Activated CD4-positive, alpha-beta memory T cell treated with anti-CD3 and anti-CD28 coated beads for 36 hours (primary cell): ENCODE measurements at regions of chr2 and their contacts with region 1.

Region 1: DNA sequence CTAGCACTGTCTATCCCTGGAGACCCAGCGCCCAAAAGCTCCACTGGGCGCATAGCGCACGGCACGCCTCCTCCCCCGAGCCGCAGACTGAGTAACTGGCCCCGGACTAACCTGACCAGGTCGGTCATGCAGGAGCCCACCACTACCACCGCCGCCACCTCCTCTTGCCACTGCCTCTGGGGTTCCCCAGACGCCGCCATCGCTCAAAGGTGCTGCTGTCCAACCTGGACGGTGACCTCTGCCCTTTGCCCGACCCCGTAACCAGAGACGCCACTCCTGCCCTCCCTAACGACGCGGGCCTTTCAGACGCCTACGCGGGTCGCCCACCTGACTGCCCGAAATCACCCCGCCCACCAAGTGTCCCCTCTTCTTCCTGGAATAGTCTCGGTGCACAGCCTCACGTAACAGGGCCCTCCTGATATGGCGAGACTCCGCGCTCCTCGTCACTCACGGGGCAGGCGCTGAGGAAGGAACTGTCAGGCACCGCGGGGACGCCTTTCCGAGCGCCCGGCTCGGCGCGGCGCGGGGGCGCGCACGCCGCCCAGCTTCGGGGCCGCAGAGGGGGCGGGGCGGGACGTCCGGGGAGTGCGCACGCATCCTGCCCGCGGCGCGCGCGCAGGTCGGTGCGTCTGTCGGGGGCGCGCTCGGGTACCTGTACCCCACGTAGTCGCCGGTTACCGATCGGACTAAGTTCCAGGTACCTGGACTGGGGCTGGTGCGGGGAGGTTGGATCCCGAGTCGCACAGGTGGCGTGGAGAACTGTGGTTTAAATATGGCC is at the starts of genes BABAM2 and RBKS:
- DNase-seq: peak; percentile 93
- H3K4me3 Mint-ChIP-seq: peak within 1 kb of the TSS; percentile 98
- H3K27ac Mint-ChIP-seq: peak within 1 kb of the TSS; percentile 100
- H3K4me1 Mint-ChIP-seq: peaks cover 63% of the 10 kb centered on the region
- H3K27me3 Mint-ChIP-seq: peaks cover 3% of the 10 kb centered on the region
- total RNA-seq, gene BABAM2: 72.3 to 76.6 TPM
- total RNA-seq, gene RBKS: 9.2 to 9.7 TPM

Region 2: DNA sequence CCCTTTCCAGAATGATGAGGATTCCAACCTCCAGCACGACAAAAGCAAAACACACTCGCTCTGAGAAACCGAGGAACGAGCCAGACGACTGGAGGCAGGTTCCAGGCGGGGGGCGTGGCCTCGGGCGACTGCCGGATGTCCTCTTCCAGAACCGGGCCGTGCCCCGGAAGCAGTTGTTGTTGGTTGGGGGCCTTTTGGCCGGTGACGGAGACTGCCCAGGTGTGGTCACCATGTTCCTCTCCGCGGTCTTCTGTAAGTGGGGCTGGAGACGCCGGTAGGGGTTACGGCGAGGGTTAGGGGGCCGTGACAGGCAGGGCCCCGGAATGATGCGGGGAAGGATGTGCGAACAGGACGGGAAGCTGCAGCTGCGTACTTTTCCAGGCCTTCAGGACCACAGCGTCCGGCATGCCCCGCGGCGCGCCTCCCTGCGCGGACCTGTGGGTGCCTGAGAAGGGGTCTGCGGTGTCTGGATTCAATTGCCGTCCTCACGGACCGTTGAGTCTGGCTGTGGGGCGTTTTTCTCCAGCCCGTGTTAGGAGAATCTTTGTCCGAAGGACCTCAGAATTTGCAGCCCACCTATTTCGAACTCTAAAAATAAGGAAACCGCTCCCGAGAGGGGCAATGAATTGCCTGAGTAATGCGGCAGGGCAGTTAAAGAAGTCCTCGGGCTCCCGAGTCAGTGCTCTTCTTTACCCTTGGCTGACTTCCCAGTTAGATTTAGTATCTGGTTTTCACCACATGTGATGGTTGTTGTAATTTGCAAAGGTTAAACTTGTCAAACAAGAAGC is 118.6 kb before region 1 on chr2 and contains the start of gene MRPL33:
- CTCF ChIA-PET with region 1: interaction called, 3 read pairs
- POLR2A ChIA-PET with region 1: interaction called, 6 read pairs
- intact Hi-C with region 1: loop called (anchors 1 kb)
- DNase-seq: peak; percentile 95
- H3K4me3 Mint-ChIP-seq: peak within 1 kb of the TSS; percentile 100
- H3K27ac Mint-ChIP-seq: peak within 1 kb of the TSS; percentile 97
- H3K4me1 Mint-ChIP-seq: peaks cover 38% of the 10 kb centered on the region
- H3K27me3 Mint-ChIP-seq: no peaks in the 10 kb centered on the region
- total RNA-seq, gene MRPL33: 83.3 to 84.2 TPM

Region 3: DNA sequence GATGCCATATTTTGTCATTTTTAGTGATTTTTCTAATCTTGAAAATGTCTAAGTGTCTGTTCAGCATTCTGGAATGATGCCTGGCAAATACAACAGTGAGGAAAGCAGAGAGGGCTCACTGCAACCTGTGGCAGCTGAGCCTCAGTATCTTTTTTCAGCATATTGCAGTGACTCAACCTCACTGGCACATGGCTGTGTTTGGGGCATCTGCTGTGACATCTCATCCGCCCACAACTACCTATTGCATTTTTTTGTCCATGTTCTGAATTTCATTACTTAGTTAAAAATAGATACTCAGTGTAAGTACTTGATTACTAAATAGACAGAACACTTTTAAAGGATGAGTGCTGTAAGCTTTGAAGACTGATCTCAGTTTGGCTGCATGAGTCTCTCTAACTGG is 10.9 kb after region 1 on chr2:
- CTCF ChIA-PET with region 1: interaction called, 3 read pairs
- POLR2A ChIA-PET with region 1: interaction called, 13 read pairs
- intact Hi-C with region 1: loop called (anchors 1 kb)
- DNase-seq: peak; percentile 63
- H3K4me3 Mint-ChIP-seq: no peak overlapping the region
- H3K27ac Mint-ChIP-seq: peak overlapping the region; percentile 76
- H3K4me1 Mint-ChIP-seq: peaks cover 78% of the 10 kb centered on the region
- H3K27me3 Mint-ChIP-seq: no peaks in the 10 kb centered on the region

Region 4: GRCh38 chr2:28030600-28030999 is 140.3 kb after region 1 on chr2:
- CTCF ChIA-PET with region 1: no interaction called
- POLR2A ChIA-PET with region 1: no interaction called
- intact Hi-C with region 1: loop called (anchors 5 kb)
- DNase-seq: no peak
- H3K4me3 Mint-ChIP-seq: no peak overlapping the region
- H3K27ac Mint-ChIP-seq: no peak overlapping the region
- H3K4me1 Mint-ChIP-seq: peaks cover 27% of the 10 kb centered on the region
- H3K27me3 Mint-ChIP-seq: no peaks in the 10 kb centered on the region

Region 5: DNA sequence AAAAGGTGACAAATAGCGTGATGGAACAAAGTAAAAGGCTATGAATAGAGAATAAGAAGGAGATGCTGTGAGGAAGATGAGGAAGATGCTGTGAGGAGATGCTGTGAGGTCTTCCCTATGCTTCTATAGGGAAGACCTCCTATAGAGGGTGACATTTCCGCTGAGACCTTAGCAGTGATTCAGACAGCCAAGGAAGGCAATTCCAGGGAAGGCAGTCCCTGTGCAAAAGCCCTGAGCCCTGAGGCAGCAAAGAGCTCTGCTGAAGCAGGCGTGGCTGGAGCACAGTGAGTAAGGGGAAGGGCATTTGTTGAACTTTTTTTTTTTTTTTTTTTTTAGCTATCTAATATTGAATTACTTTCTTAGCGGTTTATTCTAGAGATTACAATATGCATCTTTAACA is 359.7 kb after region 1 on chr2:
- CTCF ChIA-PET with region 1: no interaction called
- POLR2A ChIA-PET with region 1: no interaction called
- intact Hi-C with region 1: loop called (anchors 5 kb)
- DNase-seq: no peak
- H3K4me3 Mint-ChIP-seq: no peak overlapping the region
- H3K27ac Mint-ChIP-seq: no peak overlapping the region
- H3K4me1 Mint-ChIP-seq: peaks cover 48% of the 10 kb centered on the region
- H3K27me3 Mint-ChIP-seq: no peaks in the 10 kb centered on the region

Region 6: GRCh38 chr2:28452534-28453081 is 562.3 kb after region 1 on chr2:
- CTCF ChIA-PET with region 1: no interaction called
- POLR2A ChIA-PET with region 1: interaction called, 6 read pairs
- intact Hi-C with region 1: loop called (anchors 2 kb)
- DNase-seq: peak; percentile 89
- H3K4me3 Mint-ChIP-seq: no peak overlapping the region
- H3K27ac Mint-ChIP-seq: peak overlapping the region; percentile 59
- H3K4me1 Mint-ChIP-seq: peaks cover 45% of the 10 kb centered on the region
- H3K27me3 Mint-ChIP-seq: no peaks in the 10 kb centered on the region